Activated CD8-positive, alpha-beta T cell treated with anti-CD3 and anti-CD28 coated beads, Interleukin-2, amount 10 ng/mL, durations not matched to agents 7 days and 5 days (primary cell): ENCODE measurements at regions of chr12 and their contacts with region 1.

Region 1: GRCh38 chr12:71685914-71686665 is at the start of gene TMEM19:
- DNase-seq: peak; percentile 86
- ATAC-seq: peak; percentile 93
- H3K4me3 Mint-ChIP-seq: peak within 1 kb of the TSS; percentile 92
- H3K27ac Mint-ChIP-seq: peak within 1 kb of the TSS; percentile 95
- H3K4me1 Mint-ChIP-seq: peaks cover 30% of the 10 kb centered on the region
- H3K27me3 Mint-ChIP-seq: no peaks in the 10 kb centered on the region
- total RNA-seq, gene TMEM19: 22.1 to 23.9 TPM

Region 2: GRCh38 chr12:71621938-71622337 is 64.2 kb before region 1 on chr12:
- CTCF ChIA-PET with region 1: no interaction called
- POLR2A ChIA-PET with region 1: no interaction called
- DNase-seq: no peak
- ATAC-seq: no peak
- H3K4me3 Mint-ChIP-seq: no peak overlapping the region
- H3K27ac Mint-ChIP-seq: no peak overlapping the region
- H3K4me1 Mint-ChIP-seq: peaks cover 13% of the 10 kb centered on the region
- H3K27me3 Mint-ChIP-seq: no peaks in the 10 kb centered on the region

Region 3: DNA sequence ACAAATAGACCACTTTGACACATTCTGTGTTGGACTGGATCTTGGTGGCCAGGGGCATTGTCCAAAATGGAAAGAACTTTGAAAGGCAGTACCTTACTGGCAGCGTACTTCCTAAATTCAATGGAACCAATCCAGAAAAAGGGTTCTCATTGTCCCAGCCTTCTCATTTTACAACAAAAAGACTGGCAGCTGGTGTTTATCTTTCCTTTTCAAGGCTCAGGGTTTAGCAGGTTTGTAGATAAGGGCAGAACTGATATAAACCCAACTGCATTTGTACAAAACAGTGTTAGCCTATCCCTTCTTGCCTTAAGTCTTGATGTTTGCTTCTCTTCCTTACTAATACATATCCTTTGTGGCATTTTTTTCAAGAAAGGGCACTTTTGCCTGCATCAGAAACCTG is 14.3 kb before region 1 on chr12:
- CTCF ChIA-PET with region 1: interaction called, 11 read pairs
- POLR2A ChIA-PET with region 1: interaction called, 4 read pairs
- DNase-seq: no peak
- ATAC-seq: no peak
- H3K4me3 Mint-ChIP-seq: no peak overlapping the region
- H3K27ac Mint-ChIP-seq: no peak overlapping the region
- H3K4me1 Mint-ChIP-seq: peaks cover 6% of the 10 kb centered on the region
- H3K27me3 Mint-ChIP-seq: no peaks in the 10 kb centered on the region

Region 4: DNA sequence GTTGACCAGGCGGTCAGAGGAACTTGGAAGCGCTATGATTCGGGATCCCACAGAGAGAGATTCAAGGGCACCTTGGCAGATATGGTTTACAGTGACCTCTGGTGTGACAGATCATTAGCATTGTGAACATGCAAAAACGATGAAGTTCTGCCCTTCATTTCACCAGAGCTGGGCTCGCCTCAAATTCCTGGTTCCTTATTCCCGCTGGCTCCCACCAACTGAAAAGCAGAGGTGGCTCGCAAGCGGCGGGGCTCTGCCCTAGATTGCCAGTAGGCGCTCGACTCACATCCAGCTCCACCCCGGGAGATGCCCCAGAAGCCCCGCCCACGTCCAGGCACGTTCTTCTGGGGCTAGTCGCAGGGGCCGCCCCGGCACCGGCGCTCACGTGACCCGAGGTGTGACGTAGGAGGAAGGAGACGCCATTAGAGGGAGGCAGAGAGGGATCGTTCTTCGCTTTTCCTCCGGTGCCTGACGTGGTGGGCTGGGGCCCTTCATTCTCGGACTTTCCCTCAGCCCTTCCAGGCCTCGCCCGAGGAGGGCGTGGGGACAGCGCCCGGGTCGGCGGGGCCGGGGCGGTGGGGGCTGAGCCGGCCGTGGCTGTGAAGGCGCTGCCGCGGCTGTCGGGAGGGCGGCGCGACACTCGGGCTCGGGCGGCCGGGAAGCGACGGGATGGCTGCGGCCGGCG is 68.5 kb after region 1 on chr12 and contains the start of gene RAB21:
- CTCF ChIA-PET with region 1: interaction called, 14 read pairs
- POLR2A ChIA-PET with region 1: interaction called, 8 read pairs
- DNase-seq: peak; percentile 99
- ATAC-seq: peak; percentile 96
- H3K4me3 Mint-ChIP-seq: peak within 1 kb of the TSS; percentile 93
- H3K27ac Mint-ChIP-seq: peak within 1 kb of the TSS; percentile 95
- H3K4me1 Mint-ChIP-seq: peaks cover 27% of the 10 kb centered on the region
- H3K27me3 Mint-ChIP-seq: peaks cover 19% of the 10 kb centered on the region
- total RNA-seq, gene RAB21: 55.7 to 56.3 TPM